ENCODE measurements at regions of chr2 and their contacts with region 1.

Region 1: DNA sequence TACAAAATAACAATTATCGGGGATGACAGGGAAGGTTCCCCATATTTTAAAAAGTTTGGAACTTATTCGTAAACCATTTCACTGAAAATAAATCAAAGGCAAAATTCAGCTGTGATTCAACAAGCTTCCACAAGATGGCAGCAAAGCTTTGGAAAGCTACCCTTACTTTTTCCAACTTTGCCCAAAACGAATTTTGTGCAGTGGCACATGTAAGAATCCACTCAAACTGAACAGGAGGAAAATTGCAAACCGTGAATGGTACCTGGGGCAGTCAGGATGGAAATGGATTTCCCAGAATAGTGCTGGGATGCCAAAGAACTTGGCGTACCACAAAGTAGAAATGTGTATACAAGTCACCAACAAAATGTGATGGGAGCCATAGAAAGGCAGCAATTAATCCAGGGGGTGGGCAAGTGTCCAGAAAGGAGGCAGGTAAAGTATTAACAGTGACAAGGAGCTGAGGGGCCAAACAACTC is 10.7 kb downstream of the RPL31 start:
- DNase-seq: peak; percentile 47 to 53
- H3K4me3 ChIP-seq: no peak overlapping the region
- CTCF ChIP-seq: peak in 1 of 3 donors; percentile 40
- POLR2A ChIP-seq: no peak

Region 2: GRCh38 chr2:100416935-100417710 is 595.6 kb before region 1 on chr2 and contains the start of gene CHST10:
- intact Hi-C with region 1: no loop called
- DNase-seq: peak in 1 of 2 donors; percentile 89
- H3K4me3 ChIP-seq: peak within 1 kb of the TSS; percentile 63
- CTCF ChIP-seq: no peak
- POLR2A ChIP-seq: no peak
- total RNA-seq, gene CHST10: 0.66 to 5.5 (median 2.4) TPM

Region 3: GRCh38 chr2:101036562-101037457 is 24.1 kb after region 1 on chr2:
- intact Hi-C with region 1: loop called (anchors 1 kb)
- DNase-seq: no peak
- H3K4me3 ChIP-seq: no peak overlapping the region
- CTCF ChIP-seq: no peak
- POLR2A ChIP-seq: no peak

Region 4: DNA sequence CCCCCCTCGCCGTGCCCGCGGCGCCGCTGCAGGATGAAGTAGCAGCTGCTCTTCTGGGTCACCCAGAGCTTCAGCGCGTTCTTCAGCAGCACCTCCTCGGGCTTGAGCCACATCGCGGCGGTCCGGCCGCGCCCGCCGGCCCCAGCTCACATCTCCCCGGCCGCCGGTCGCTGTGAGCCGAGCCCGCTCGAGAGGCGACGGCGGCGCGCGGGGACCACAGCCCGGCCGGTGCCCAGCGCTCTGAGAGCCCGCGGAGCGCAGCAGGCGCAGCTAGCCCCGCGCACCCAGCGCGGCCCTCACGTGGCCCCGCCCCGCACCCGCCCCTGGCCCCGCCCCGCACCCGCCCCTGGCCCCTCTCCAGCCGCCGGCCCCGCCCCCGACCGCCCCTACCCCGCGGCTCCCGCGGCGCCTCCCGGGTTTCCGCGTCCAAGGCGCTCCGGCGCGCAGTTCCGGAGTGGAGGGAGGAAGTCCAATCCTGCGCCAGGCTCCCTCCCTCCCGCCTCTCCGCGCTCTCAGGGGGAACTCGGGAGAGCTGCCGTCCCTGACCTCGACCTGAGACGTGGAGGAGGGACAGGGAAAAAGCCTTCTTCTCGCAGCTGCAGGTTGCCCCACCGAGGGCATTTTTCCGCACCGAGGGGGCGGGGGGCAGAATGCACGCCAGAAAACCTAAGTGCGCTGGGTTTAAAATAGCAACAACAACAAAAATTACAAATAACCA is 138.6 kb after region 1 on chr2 and contains the start of gene TBC1D8:
- intact Hi-C with region 1: loop called (anchors 5 kb)
- DNase-seq: peak; percentile 74 to 97
- H3K4me3 ChIP-seq: peak within 1 kb of the TSS; percentile 71
- CTCF ChIP-seq: no peak
- POLR2A ChIP-seq: peak in 1 of 2 donors; percentile 13
- total RNA-seq, gene TBC1D8: 29.4 to 102 (median 46.1) TPM

Measured in lower leg skin (tissue), 4 donors.